PC-3 (cell line): ENCODE measurements at regions of chr3 and their contacts with region 1.

Region 1: GRCh38 chr3:166685246-166685645 is 694.9 kb downstream of the ZBBX start:
- DNase-seq: peak; percentile 47
- ATAC-seq: peak; percentile 74
- H3K4me3 ChIP-seq: no peak overlapping the region
- H3K27ac ChIP-seq: no peak overlapping the region
- H3K4me1 ChIP-seq: peaks cover 3% of the 10 kb centered on the region; the same call in 1 of the 2 replicates
- H3K27me3 ChIP-seq: no peaks in the 10 kb centered on the region
- CTCF ChIP-seq: peak; percentile 57

Region 2: DNA sequence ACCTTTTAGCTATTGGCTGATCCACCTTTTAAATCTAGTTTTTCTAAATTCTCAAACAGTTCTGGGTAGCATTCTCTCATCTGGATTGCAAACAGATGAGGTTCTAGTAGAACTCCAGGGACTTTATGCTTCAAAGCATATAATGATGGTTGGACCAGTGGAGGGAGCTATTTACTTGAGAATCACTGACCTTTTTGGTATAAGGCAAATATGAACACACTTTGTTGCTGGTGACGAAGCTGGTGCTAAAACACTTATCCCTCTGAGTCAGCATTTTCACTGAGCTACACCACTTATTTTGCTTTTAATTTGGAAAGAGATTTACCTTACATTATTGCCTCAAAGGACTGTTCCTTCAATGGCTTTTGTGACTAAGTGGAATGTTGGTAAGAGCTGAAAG is 1430.4 kb before region 1 on chr3:
- CTCF ChIA-PET with region 1: no interaction called
- POLR2A ChIA-PET with region 1: no interaction called
- intact Hi-C with region 1: loop called (anchors 10 kb)
- DNase-seq: peak; percentile 69
- ATAC-seq: peak; percentile 89
- H3K4me3 ChIP-seq: no peak overlapping the region
- H3K27ac ChIP-seq: no peak overlapping the region
- H3K4me1 ChIP-seq: peaks cover 4% of the 10 kb centered on the region
- H3K27me3 ChIP-seq: no peaks in the 10 kb centered on the region
- CTCF ChIP-seq: peak; percentile 69

Region 3: DNA sequence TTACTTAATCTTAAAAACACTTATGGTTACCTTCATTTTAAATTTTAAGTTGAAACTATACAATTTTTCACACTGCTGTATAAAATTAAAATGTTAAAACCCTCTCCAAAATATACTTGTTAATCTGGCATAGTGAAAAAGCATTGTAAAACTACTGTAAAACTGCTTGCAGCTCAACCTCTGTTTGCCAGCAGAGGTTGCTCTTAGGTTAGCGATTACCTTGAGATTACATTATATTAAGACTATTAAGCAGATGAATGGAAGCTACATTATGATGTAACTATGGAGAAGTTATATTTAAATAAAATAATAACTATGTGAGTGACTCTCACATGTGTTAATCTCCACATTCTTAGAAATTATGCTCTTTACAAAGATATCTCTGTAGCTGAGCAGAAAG is 1345.5 kb before region 1 on chr3:
- CTCF ChIA-PET with region 1: no interaction called
- POLR2A ChIA-PET with region 1: no interaction called
- intact Hi-C with region 1: loop called (anchors 2 kb)
- DNase-seq: peak; percentile 43
- ATAC-seq: peak; percentile 67; the same call in 1 of the 2 replicates
- H3K4me3 ChIP-seq: no peak overlapping the region
- H3K27ac ChIP-seq: no peak overlapping the region
- H3K4me1 ChIP-seq: no peaks in the 10 kb centered on the region
- H3K27me3 ChIP-seq: no peaks in the 10 kb centered on the region
- CTCF ChIP-seq: peak; percentile 68

Region 4: GRCh38 chr3:165854696-165855095 is 830.5 kb before region 1 on chr3:
- CTCF ChIA-PET with region 1: interaction called, 9 read pairs
- POLR2A ChIA-PET with region 1: no interaction called
- intact Hi-C with region 1: loop called (anchors 1 kb)
- DNase-seq: peak; percentile 58
- ATAC-seq: peak; percentile 21
- H3K4me3 ChIP-seq: no peak overlapping the region
- H3K27ac ChIP-seq: no peak overlapping the region
- H3K4me1 ChIP-seq: peaks cover 8% of the 10 kb centered on the region
- H3K27me3 ChIP-seq: no peaks in the 10 kb centered on the region
- CTCF ChIP-seq: peak; percentile 85

Region 5: GRCh38 chr3:165895918-165896317 is 789.3 kb before region 1 on chr3:
- CTCF ChIA-PET with region 1: no interaction called
- POLR2A ChIA-PET with region 1: no interaction called
- intact Hi-C with region 1: loop called (anchors 10 kb)
- DNase-seq: peak; percentile 51
- ATAC-seq: peak; percentile 60; the same call in 1 of the 2 replicates
- H3K4me3 ChIP-seq: no peak overlapping the region
- H3K27ac ChIP-seq: no peak overlapping the region
- H3K4me1 ChIP-seq: no peaks in the 10 kb centered on the region
- H3K27me3 ChIP-seq: no peaks in the 10 kb centered on the region
- CTCF ChIP-seq: peak; percentile 82

Region 6: DNA sequence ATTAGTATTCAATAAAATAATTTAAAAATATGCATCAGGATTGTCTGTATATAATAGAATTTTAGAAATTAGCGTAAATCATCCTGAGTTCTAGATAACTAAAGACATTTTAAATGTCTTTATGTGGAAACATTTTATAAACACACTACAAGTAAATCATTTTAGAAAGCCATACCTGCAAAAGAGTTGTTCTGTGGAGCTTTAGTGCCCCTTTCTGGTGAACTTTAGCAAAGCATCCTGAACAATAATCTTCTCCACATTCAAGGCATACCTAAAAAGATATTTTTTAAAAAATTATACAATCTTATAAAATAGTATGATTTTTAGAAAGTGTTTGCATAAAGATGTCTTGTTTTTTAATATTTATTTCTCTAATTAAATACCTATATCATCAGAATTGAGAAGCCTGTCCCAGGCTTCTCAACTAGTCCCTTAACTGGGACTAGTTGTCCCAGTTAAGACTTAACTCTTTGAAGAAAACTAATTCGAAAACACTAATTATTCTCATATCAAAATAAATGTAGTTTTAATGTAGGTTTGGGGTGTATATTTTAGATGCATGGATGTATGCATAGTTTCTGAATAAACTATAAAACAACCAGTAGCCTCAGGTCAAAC is 665.1 kb after region 1 on chr3:
- CTCF ChIA-PET with region 1: no interaction called
- POLR2A ChIA-PET with region 1: no interaction called
- intact Hi-C with region 1: loop called (anchors 5 kb)
- DNase-seq: peak; percentile 59
- ATAC-seq: peak; percentile 40; the same call in 1 of the 2 replicates
- H3K4me3 ChIP-seq: no peak overlapping the region
- H3K27ac ChIP-seq: no peak overlapping the region
- H3K4me1 ChIP-seq: no peaks in the 10 kb centered on the region
- H3K27me3 ChIP-seq: no peaks in the 10 kb centered on the region
- CTCF ChIP-seq: peak; percentile 65